ENCODE measurements at regions of chr20 and their contacts with region 1.

Region 1: GRCh38 chr20:44398303-44398702 is 42.8 kb downstream of the HNF4A start:
- DNase-seq: no peak
- ATAC-seq: no peak
- H3K4me3 ChIP-seq: no peak overlapping the region
- H3K27ac ChIP-seq: no peak overlapping the region
- H3K4me1 ChIP-seq: peaks cover 85% of the 10 kb centered on the region
- H3K27me3 ChIP-seq: no peaks in the 10 kb centered on the region; a peak in 1 of 5 replicates
- CTCF ChIP-seq: no peak
- EP300 ChIP-seq: no peak
- POLR2A ChIP-seq: no peak
- RAD21 ChIP-seq: no peak

Region 2: DNA sequence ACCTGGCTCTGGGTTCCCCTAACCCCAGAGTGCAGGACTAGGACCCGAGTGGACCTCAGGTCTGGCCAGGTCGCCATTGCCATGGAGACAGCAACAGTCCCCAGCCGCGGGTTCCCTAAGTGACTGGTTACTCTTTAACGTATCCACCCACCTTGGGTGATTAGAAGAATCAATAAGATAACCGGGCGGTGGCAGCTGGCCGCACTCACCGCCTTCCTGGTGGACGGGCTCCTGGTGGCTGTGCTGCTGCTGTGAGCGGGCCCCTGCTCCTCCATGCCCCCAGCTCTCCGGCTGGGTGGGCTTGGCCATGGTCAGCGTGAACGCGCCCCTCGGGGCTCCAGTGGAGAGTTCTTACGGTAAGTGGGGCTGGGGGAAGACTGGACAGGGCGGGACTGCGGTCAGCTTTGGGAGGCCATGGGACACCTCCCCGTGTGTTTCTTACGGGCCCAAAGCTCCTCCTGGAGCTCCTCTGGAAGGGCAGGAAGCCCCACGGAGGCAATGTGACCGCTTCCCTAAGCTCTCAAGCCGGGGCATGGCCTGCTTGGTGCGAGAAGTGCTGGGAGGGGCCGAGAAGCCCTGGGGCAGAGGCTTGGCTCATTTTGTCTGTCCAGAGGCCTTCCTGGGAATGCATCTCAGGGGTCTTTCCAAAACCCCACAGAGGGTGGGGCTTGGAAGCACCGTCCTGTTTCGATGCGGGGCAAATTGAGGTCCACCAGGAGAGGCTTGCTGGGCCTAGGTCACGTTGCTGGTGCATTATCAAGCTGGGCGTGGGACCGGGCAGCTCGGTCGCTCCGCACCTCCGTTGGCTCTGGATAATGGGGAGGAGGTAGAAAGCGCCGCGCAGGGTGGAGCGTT is 42.6 kb before region 1 on chr20 and contains the start of gene HNF4A:
- CTCF ChIA-PET with region 1: no interaction called
- POLR2A ChIA-PET with region 1: interaction called, 38 read pairs
- in situ Hi-C with region 1: no loop called
- intact Hi-C with region 1: loop called (anchors 5 kb)
- DNase-seq: peak; percentile 92
- ATAC-seq: peak; percentile 91
- H3K4me3 ChIP-seq: peak within 1 kb of the TSS; percentile 69 to 95 (median 92)
- H3K27ac ChIP-seq: peak within 1 kb of the TSS; percentile 73
- H3K4me1 ChIP-seq: peaks cover 76% of the 10 kb centered on the region
- H3K27me3 ChIP-seq: no peaks in the 10 kb centered on the region; a peak in 1 of 5 replicates
- CTCF ChIP-seq: peak; percentile 9; the same call in 1 of the 2 replicates
- EP300 ChIP-seq: peak in 1 of 2 experiments; percentile 50; a peak in 1 of 4 replicates
- POLR2A ChIP-seq: peak; percentile 85 to 98
- RAD21 ChIP-seq: peak; percentile 66
- total RNA-seq, gene HNF4A: 169 and 190 TPM in 2 replicates

Region 3: GRCh38 chr20:44422083-44422482 is 23.8 kb after region 1 on chr20:
- CTCF ChIA-PET with region 1: no interaction called
- POLR2A ChIA-PET with region 1: interaction called, 86 read pairs
- in situ Hi-C with region 1: no loop called
- intact Hi-C with region 1: loop called (anchors 1 kb)
- DNase-seq: no peak
- ATAC-seq: no peak
- H3K4me3 ChIP-seq: no peak overlapping the region
- H3K27ac ChIP-seq: peak overlapping the region; percentile 12
- H3K4me1 ChIP-seq: peaks cover 63% of the 10 kb centered on the region
- H3K27me3 ChIP-seq: no peaks in the 10 kb centered on the region
- CTCF ChIP-seq: no peak
- EP300 ChIP-seq: no peak
- POLR2A ChIP-seq: peak in 1 of 2 experiments; percentile 35; a peak in 1 of 4 replicates
- RAD21 ChIP-seq: no peak

Region 4: DNA sequence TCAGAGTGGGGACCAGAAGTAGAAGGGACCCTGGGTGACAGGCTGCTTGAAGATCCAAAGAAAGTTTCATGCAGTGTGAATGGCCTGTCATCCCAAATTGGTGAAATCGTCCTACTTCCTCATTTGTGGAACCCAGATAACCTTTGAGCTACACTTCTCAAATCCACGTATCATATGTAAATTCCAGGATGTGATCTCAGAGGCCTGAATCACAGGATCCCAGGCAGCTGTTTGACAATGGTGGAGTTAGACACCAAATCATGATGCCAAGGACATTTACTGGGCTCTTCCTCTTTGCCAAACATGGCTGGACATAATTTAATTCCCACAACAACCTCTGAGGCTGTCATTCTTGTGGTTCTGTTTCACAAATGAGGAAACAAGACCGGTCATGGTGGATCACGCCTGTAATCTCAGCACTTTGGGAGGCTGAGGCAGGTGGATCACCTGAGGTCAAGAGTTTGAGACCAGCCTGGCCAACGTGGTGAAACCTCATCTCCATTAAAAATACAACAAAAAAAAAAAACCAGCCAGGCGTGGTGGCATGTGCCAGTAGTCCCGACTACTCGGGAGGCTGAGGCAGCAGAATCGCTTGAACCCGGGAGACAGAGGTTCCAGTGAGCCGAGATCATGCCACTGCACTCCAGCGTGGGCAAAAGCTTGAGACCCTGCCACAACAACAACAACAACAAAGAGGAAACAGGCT is 37.5 kb after region 1 on chr20:
- CTCF ChIA-PET with region 1: no interaction called
- POLR2A ChIA-PET with region 1: interaction called, 51 read pairs
- in situ Hi-C with region 1: no loop called
- intact Hi-C with region 1: loop called (anchors 2 kb)
- DNase-seq: peak; percentile 90
- ATAC-seq: peak; percentile 1; the same call in 2 of the 3 replicates
- H3K4me3 ChIP-seq: no peak overlapping the region
- H3K27ac ChIP-seq: peak overlapping the region; percentile 33
- H3K4me1 ChIP-seq: peaks cover 89% of the 10 kb centered on the region
- H3K27me3 ChIP-seq: no peaks in the 10 kb centered on the region
- CTCF ChIP-seq: no peak
- EP300 ChIP-seq: no peak
- POLR2A ChIP-seq: no peak
- RAD21 ChIP-seq: no peak

Region 5: DNA sequence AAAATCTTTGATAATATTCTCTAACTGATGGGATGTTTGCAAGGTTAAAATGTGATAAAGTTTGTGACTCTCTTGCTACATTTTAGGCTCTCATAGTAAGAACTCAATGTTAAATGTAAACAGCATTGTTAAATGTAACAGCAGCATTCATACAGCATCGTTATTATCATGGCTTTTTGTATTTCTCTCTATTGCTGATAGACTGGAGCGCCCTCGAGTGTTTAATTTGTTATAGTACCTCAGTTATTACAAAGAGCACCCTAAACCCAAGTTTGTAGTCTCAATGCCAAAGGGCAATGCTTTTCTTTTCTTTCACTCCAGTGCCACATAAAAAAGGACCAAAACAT is 62.5 kb after region 1 on chr20:
- CTCF ChIA-PET with region 1: no interaction called
- POLR2A ChIA-PET with region 1: interaction called, 7 read pairs
- in situ Hi-C with region 1: loop called (anchors 5 kb)
- intact Hi-C with region 1: loop called (anchors 1 kb)
- DNase-seq: peak; percentile 73
- ATAC-seq: peak; percentile 60
- H3K4me3 ChIP-seq: peak overlapping the region; percentile 6 to 55 (median 18); a peak in 4 of 6 replicates
- H3K27ac ChIP-seq: peak overlapping the region; percentile 58
- H3K4me1 ChIP-seq: peaks cover 69% of the 10 kb centered on the region
- H3K27me3 ChIP-seq: no peaks in the 10 kb centered on the region
- CTCF ChIP-seq: peak; percentile 89
- EP300 ChIP-seq: no peak
- POLR2A ChIP-seq: no peak
- RAD21 ChIP-seq: peak; percentile 82

Measured in HepG2 (cell line).